ENCODE measurements at regions of chr12 and their contacts with region 1.

Region 1: DNA sequence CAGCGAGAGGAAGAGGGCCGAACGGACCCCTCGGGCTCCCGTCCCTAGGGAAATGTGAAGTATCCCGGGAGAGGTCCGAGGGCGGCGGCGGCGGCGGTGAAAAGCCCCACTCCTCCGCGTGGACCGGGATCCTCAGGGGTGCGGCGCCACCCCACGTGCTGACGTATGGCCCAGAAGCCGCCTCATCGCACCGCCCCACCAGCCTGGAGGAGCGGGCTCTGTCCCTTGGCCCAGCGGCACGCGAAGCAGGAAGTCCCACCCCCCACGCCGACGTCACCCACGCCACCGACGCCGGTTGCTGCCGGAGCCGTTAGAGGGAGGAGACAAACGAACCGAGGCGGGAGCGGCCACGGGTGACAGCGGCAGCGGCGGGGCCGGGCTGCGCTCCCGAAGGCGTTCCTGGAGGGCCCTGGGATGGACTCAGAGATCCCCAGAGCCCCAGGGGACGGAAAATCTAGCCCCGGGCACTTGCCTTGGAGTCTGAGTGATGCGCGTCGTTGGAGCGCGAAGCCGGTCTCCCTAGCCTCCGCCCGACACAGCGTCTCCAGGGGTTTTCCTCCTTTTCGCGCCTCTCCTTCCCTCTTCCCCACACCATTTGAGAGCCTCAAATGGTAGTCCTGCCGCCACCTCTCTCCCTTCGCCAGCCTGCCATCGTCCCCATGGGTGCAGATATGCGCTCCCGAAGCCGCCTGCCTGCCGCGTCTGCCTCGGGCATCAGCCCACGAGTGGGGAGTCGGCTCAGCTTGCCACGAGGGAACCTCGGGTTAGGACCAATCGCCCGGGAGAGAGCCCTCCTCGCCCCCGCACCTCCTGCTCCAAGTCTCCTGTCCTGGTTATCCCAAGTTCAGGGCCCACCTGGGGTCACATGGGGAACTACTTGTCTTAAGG is at the start of gene CEP83:
- DNase-seq: peak; percentile 93 to 99 (median 96)
- H3K4me3 ChIP-seq: peak within 1 kb of the TSS; percentile 55 to 96 (median 87)
- H3K27ac ChIP-seq: peak within 1 kb of the TSS in 58 of 59 donors; percentile 9 to 92 (median 83)
- H3K27me3 ChIP-seq: no peaks in the 10 kb centered on the region
- CTCF ChIP-seq: peak in 30 of 56 donors; percentile 2 to 52 (median 22)
- total RNA-seq, gene CEP83: 10.1 to 25.9 (median 16.7) TPM

Region 2: DNA sequence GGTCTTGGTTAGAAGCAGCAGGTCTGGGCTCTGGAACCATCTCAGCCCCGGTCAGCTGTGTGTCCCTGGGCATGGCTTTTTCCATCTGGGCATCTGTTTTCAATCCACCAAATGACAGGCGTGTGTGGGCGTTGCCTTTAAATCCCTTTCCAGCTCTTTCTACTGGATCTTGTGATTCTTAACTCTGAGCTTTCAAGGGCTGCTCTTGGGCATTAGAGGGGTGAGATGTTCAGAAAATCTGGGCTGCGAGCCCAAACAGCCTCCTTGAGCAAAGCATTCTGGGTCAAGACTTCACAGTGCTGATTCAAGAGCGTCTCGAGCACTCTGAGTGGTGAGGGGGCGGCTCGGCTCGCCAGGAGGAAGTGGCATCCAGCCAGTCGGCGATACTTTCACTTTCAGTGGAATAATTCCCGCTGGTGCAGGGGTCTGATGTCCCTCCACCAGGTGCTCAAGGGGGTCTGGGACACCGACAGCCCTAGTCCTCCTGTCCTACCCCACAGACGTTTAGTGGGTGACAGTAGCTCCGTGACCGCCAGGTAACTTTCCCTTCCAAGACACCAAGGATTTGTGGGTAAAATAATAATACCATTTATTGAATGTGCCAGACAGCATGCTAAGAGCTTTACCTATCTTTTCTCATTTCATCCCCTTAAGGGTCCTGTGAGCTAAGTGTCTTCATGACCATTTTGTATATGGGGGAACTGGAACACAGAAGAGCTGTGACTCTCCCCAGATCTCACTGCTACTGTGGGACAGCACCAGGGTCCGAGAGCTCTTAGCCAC is 197.6 kb before region 1 on chr12:
- intact Hi-C with region 1: loop called in 1 of 2 experiments (anchors 5 kb)
- DNase-seq: peak; percentile 39 to 85 (median 76)
- H3K4me3 ChIP-seq: peak overlapping the region; percentile 29 to 75 (median 58)
- H3K27ac ChIP-seq: peak overlapping the region; percentile 4 to 90 (median 77)
- H3K27me3 ChIP-seq: no peaks in the 10 kb centered on the region
- CTCF ChIP-seq: peak in 1 of 56 donors; percentile 12

Region 3: GRCh38 chr12:94532490-94533422 is 72.8 kb after region 1 on chr12:
- intact Hi-C with region 1: loop called in 1 of 2 experiments (anchors 5 kb)
- DNase-seq: peak; percentile 49 to 84 (median 65)
- H3K4me3 ChIP-seq: peak overlapping the region in 1 of 59 donors; percentile 18
- H3K27ac ChIP-seq: peak overlapping the region in 1 of 59 donors; percentile 18
- H3K27me3 ChIP-seq: no peaks in the 10 kb centered on the region
- CTCF ChIP-seq: peak; percentile 58 to 95 (median 86)

Region 4: DNA sequence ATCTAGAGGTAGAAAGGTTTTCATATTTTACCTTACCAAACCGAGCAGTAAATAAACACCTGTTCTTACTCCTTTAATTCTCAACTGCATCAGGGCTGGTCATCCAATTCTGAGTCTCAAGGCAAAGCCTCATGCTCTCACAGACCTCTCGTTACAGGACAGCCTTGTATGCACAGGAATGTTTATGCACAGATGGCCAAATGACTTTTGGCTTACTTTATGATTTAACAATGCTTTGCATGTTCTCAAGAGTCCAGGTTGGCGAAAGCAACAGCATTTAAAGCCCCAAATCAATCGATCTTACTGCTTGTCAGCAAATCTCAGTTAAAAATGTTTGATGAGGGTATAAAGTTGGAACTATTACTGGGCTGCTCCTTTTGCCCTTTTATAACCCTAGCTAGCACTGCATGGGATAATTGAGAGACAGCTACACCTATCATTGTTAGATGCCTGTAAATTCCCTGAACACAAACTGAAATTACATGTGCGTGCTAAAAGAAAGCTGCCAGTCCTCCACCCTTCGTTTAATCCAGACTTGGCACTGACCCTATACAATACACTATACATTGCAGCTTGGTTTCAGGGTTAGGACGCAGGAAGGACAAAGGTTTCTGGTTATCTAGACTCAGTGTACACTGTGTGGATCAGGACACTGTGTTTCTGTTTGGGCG is 126.8 kb after region 1 on chr12:
- intact Hi-C with region 1: no loop called
- DNase-seq: no peak
- H3K4me3 ChIP-seq: no peak overlapping the region
- H3K27ac ChIP-seq: peak overlapping the region in 36 of 59 donors; percentile 3 to 75 (median 34)
- H3K27me3 ChIP-seq: no peaks in the 10 kb centered on the region
- CTCF ChIP-seq: no peak

Measured in dorsolateral prefrontal cortex (tissue), 120 donors.